ENCODE measurements at regions of chr2 and their contacts with region 1.

Region 1: DNA sequence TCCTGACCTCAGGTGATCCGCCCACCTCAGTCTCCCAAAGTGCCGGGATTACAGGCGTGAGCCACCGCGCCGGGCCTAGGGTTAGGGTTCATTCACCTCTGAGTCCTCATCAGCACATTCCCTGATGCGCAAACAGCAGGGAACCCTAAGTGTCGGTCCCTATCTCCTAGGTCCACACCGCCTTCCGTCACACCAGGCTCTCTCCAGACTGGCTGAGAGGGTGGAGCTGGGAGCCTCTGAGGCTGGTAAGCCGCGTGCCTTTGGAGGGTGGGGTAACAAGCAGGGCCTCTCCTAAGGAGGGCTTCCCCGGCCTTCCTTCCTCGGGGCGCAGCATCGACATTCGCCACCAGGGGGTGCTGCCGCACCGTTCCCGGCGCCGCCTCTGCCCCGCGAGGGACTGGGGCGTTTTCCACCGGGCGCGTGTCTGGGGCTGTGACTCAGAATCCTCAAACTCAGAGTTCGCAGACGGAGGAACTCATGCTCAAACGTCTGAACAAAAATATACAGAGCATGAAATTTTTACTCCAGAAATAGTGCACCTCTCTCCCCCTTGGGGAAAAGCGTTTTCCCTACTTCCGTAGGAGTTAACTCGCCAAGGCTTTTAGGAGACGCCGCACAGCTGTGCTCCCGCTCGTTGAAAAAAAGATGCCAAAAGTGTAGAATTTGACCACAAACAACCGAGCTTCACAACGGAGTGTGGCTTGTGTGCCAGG is 63.9 kb upstream of the ASAP2 start:
- DNase-seq: peak; percentile 95 to 97
- H3K4me3 ChIP-seq: peak overlapping the region; percentile 14; the same call in 1 of the 2 replicates
- H3K4me3 Mint-ChIP-seq: peak overlapping the region; percentile 49
- H3K27ac Mint-ChIP-seq: peak overlapping the region; percentile 15
- H3K4me1 ChIP-seq: peaks cover 21% of the 10 kb centered on the region
- H3K4me1 Mint-ChIP-seq: peaks cover 7% of the 10 kb centered on the region
- H3K27me3 ChIP-seq: no peaks in the 10 kb centered on the region
- H3K27me3 Mint-ChIP-seq: no peaks in the 10 kb centered on the region
- CTCF ChIP-seq: peak; percentile 98 to 99

Region 2: GRCh38 chr2:9087121-9087681 is 55.5 kb before region 1 on chr2:
- CTCF ChIA-PET with region 1: no interaction called
- POLR2A ChIA-PET with region 1: no interaction called
- intact Hi-C with region 1: no loop called
- DNase-seq: no peak
- H3K4me3 ChIP-seq: no peak overlapping the region
- H3K4me3 Mint-ChIP-seq: no peak overlapping the region
- H3K27ac Mint-ChIP-seq: no peak overlapping the region
- H3K4me1 ChIP-seq: peaks cover 15% of the 10 kb centered on the region
- H3K4me1 Mint-ChIP-seq: peaks cover 12% of the 10 kb centered on the region
- H3K27me3 ChIP-seq: no peaks in the 10 kb centered on the region
- H3K27me3 Mint-ChIP-seq: no peaks in the 10 kb centered on the region
- CTCF ChIP-seq: no peak

Region 3: DNA sequence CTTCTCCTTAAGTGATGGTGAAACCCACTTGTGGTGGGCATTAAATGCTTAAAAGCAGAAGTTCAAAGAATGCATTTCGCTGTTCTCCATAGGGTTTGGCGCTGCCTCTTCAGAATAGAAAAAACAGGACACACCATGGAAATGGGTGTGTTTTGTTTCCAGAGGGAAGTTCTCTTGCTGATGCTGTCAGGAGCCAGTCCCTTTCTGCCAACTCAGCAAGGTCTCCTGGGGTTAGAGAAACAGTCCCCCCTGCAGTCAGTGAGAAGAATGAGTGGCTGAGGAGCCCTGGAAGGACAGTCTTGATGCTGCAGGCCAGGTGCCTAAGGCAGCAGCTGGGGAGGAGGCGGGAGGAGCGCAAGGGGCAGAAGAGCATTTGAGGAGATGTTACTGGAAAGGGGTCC is 26.1 kb after region 1 on chr2:
- CTCF ChIA-PET with region 1: interaction called, 10 read pairs
- POLR2A ChIA-PET with region 1: no interaction called
- intact Hi-C with region 1: loop called (anchors 1 kb)
- DNase-seq: peak in 1 of 2 experiments; percentile 18
- H3K4me3 ChIP-seq: no peak overlapping the region
- H3K4me3 Mint-ChIP-seq: peak overlapping the region; percentile 10
- H3K27ac Mint-ChIP-seq: no peak overlapping the region
- H3K4me1 ChIP-seq: peaks cover 55% of the 10 kb centered on the region
- H3K4me1 Mint-ChIP-seq: peaks cover 59% of the 10 kb centered on the region
- H3K27me3 ChIP-seq: no peaks in the 10 kb centered on the region
- H3K27me3 Mint-ChIP-seq: no peaks in the 10 kb centered on the region
- CTCF ChIP-seq: no peak

Region 4: GRCh38 chr2:9205963-9206948 is 63.5 kb after region 1 on chr2 and contains the start of gene ASAP2:
- CTCF ChIA-PET with region 1: interaction called, 15 read pairs
- POLR2A ChIA-PET with region 1: no interaction called
- intact Hi-C with region 1: loop called (anchors 1 kb)
- DNase-seq: peak; percentile 65 to 86
- H3K4me3 ChIP-seq: peak within 1 kb of the TSS; percentile 88
- H3K4me3 Mint-ChIP-seq: peak within 1 kb of the TSS; percentile 80
- H3K27ac Mint-ChIP-seq: peak within 1 kb of the TSS; percentile 59
- H3K4me1 ChIP-seq: peaks cover 36% of the 10 kb centered on the region
- H3K4me1 Mint-ChIP-seq: peaks cover 23% of the 10 kb centered on the region
- H3K27me3 ChIP-seq: no peaks in the 10 kb centered on the region
- H3K27me3 Mint-ChIP-seq: no peaks in the 10 kb centered on the region
- CTCF ChIP-seq: peak; percentile 84 to 87
- total RNA-seq, gene ASAP2: 25.6 and 27.8 TPM in 2 replicates

Region 5: GRCh38 chr2:9333591-9334171 is 191.0 kb after region 1 on chr2:
- CTCF ChIA-PET with region 1: interaction called, 19 read pairs
- POLR2A ChIA-PET with region 1: no interaction called
- intact Hi-C with region 1: loop called (anchors 1 kb)
- DNase-seq: peak; percentile 69 to 73
- H3K4me3 ChIP-seq: no peak overlapping the region
- H3K4me3 Mint-ChIP-seq: no peak overlapping the region
- H3K27ac Mint-ChIP-seq: no peak overlapping the region
- H3K4me1 ChIP-seq: no peaks in the 10 kb centered on the region
- H3K4me1 Mint-ChIP-seq: peaks cover 26% of the 10 kb centered on the region
- H3K27me3 ChIP-seq: no peaks in the 10 kb centered on the region
- H3K27me3 Mint-ChIP-seq: no peaks in the 10 kb centered on the region
- CTCF ChIP-seq: peak; percentile 55 to 86

Region 6: DNA sequence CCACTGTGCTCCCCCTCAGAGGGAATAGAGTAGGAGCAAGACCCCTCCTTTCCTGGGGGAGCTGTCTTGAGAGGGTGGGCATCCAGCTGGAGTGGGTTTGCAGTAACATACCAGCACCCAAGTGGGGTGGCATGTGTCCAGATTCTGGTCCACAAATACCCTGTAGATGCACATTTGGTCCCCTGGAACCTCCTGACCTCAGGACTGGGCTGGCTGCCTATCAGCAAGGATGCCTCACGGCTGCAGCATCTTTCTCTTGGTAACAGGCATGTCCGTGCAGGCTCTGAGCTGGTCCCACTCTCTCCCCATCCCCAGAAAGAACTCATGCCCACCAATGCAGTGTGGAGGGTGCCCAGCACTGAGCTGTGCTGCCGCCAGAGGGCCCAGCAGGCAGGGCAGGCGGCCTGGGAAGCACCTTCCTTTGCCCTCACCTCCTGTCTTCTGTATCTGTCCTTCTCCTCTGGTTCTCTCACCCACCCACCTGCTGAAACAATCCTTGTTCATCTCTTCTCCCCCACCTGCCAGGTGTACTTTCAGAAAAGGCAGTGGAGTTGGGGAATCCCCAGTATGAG is 233.2 kb after region 1 on chr2:
- CTCF ChIA-PET with region 1: interaction called, 11 read pairs
- POLR2A ChIA-PET with region 1: no interaction called
- intact Hi-C with region 1: loop called (anchors 1 kb)
- DNase-seq: no peak
- H3K4me3 ChIP-seq: no peak overlapping the region
- H3K4me3 Mint-ChIP-seq: no peak overlapping the region
- H3K27ac Mint-ChIP-seq: no peak overlapping the region
- H3K4me1 ChIP-seq: no peaks in the 10 kb centered on the region
- H3K4me1 Mint-ChIP-seq: no peaks in the 10 kb centered on the region
- H3K27me3 ChIP-seq: no peaks in the 10 kb centered on the region
- H3K27me3 Mint-ChIP-seq: no peaks in the 10 kb centered on the region
- CTCF ChIP-seq: no peak

Region 7: GRCh38 chr2:9423100-9423921 is 280.6 kb after region 1 on chr2 and contains the starts of genes CPSF3 and ITGB1BP1:
- CTCF ChIA-PET with region 1: interaction called, 3 read pairs
- POLR2A ChIA-PET with region 1: no interaction called
- intact Hi-C with region 1: loop called (anchors 2 kb)
- DNase-seq: peak; percentile 98 to 99
- H3K4me3 ChIP-seq: peak within 1 kb of the TSS; percentile 89
- H3K4me3 Mint-ChIP-seq: no peak within 1 kb of the TSS
- H3K27ac Mint-ChIP-seq: no peak within 1 kb of the TSS
- H3K4me1 ChIP-seq: peaks cover 9% of the 10 kb centered on the region
- H3K4me1 Mint-ChIP-seq: peaks cover 18% of the 10 kb centered on the region
- H3K27me3 ChIP-seq: no peaks in the 10 kb centered on the region
- H3K27me3 Mint-ChIP-seq: no peaks in the 10 kb centered on the region
- CTCF ChIP-seq: no peak
- total RNA-seq, gene CPSF3: 80.6 and 95.0 TPM in 2 replicates
- total RNA-seq, gene ITGB1BP1: 82.4 and 107 TPM in 2 replicates

Region 8: GRCh38 chr2:9555297-9556141 is 412.8 kb after region 1 on chr2 and contains the start of gene ADAM17:
- CTCF ChIA-PET with region 1: no interaction called
- POLR2A ChIA-PET with region 1: no interaction called
- intact Hi-C with region 1: no loop called
- DNase-seq: peak; percentile 97 to 98
- H3K4me3 ChIP-seq: peak within 1 kb of the TSS; percentile 92
- H3K4me3 Mint-ChIP-seq: peak within 1 kb of the TSS; percentile 91
- H3K27ac Mint-ChIP-seq: peak within 1 kb of the TSS; percentile 90
- H3K4me1 ChIP-seq: peaks cover 27% of the 10 kb centered on the region; the same call in 1 of the 2 replicates
- H3K4me1 Mint-ChIP-seq: peaks cover 30% of the 10 kb centered on the region
- H3K27me3 ChIP-seq: no peaks in the 10 kb centered on the region
- H3K27me3 Mint-ChIP-seq: no peaks in the 10 kb centered on the region
- CTCF ChIP-seq: peak; percentile 61 to 69
- total RNA-seq, gene ADAM17: 36.3 and 40.5 TPM in 2 replicates

Measured in Caco-2 (cell line).